ENCODE measurements at regions of chr16 and their contacts with region 1.

Region 1: GRCh38 chr16:52547004-52547833 is at the start of gene TOX3:
- DNase-seq: no peak
- ATAC-seq: peak; percentile 34
- H3K4me3 ChIP-seq: peak within 1 kb of the TSS; percentile 91 to 96 (median 92)
- H3K27ac ChIP-seq: peak within 1 kb of the TSS; percentile 67
- H3K4me1 ChIP-seq: peaks cover 32% of the 10 kb centered on the region
- H3K27me3 ChIP-seq: no peaks in the 10 kb centered on the region; a peak in 1 of 5 replicates
- CTCF ChIP-seq: no peak
- EP300 ChIP-seq: 0 out of 4 replicates have a peak, but pooled peaks of 1 of the 2 experiments have one; percentile 9
- POLR2A ChIP-seq: peak in 1 of 2 experiments; percentile 60; a peak in 1 of 4 replicates
- RAD21 ChIP-seq: no peak
- total RNA-seq, gene TOX3: 12.1 and 14.5 TPM in 2 replicates

Region 2: DNA sequence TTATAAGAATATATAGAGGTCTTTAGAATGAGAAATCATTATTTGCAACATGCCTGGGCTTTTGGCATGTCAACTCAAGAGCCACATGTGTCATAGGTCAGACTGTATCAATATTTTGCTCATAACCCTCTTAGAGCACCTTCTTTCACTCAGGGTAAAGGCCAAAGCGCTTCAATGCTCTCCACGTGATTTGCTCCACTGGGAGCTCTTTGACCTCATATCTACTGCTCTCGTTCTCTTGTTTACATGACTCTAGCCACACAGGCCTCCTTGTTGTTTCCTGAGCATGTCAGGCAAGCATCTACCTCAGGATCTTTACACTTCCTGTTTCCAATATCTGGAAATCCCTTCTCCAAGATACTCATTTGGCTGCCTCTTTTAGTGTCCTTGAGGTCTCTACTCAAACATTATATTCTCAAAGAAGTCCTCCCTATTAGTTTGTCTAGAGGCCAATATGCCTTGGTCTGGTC is 148.7 kb before region 1 on chr16:
- CTCF ChIA-PET with region 1: no interaction called
- POLR2A ChIA-PET with region 1: interaction called, 12 read pairs
- in situ Hi-C with region 1: no loop called
- intact Hi-C with region 1: loop called (anchors 5 kb)
- DNase-seq: peak; percentile 99
- ATAC-seq: peak; percentile 100
- H3K4me3 ChIP-seq: no peak overlapping the region
- H3K27ac ChIP-seq: peak overlapping the region; percentile 66
- H3K4me1 ChIP-seq: peaks cover 28% of the 10 kb centered on the region
- H3K27me3 ChIP-seq: no peaks in the 10 kb centered on the region
- CTCF ChIP-seq: no peak
- EP300 ChIP-seq: peak; percentile 79 to 97; a peak in 3 of 4 replicates
- POLR2A ChIP-seq: no peak
- RAD21 ChIP-seq: no peak

Region 3: GRCh38 chr16:52456368-52456767 is 90.9 kb before region 1 on chr16:
- CTCF ChIA-PET with region 1: interaction called, 3 read pairs
- POLR2A ChIA-PET with region 1: interaction called, 5 read pairs
- in situ Hi-C with region 1: loop called (anchors 5 kb)
- intact Hi-C with region 1: loop called (anchors 5 kb)
- DNase-seq: peak; percentile 95
- ATAC-seq: peak; percentile 92
- H3K4me3 ChIP-seq: no peak overlapping the region; a peak in 1 of 6 replicates
- H3K27ac ChIP-seq: peak overlapping the region; percentile 73
- H3K4me1 ChIP-seq: peaks cover 64% of the 10 kb centered on the region
- H3K27me3 ChIP-seq: no peaks in the 10 kb centered on the region
- CTCF ChIP-seq: no peak
- EP300 ChIP-seq: peak in 1 of 2 experiments; percentile 77; a peak in 1 of 4 replicates
- POLR2A ChIP-seq: no peak
- RAD21 ChIP-seq: no peak

Region 4: DNA sequence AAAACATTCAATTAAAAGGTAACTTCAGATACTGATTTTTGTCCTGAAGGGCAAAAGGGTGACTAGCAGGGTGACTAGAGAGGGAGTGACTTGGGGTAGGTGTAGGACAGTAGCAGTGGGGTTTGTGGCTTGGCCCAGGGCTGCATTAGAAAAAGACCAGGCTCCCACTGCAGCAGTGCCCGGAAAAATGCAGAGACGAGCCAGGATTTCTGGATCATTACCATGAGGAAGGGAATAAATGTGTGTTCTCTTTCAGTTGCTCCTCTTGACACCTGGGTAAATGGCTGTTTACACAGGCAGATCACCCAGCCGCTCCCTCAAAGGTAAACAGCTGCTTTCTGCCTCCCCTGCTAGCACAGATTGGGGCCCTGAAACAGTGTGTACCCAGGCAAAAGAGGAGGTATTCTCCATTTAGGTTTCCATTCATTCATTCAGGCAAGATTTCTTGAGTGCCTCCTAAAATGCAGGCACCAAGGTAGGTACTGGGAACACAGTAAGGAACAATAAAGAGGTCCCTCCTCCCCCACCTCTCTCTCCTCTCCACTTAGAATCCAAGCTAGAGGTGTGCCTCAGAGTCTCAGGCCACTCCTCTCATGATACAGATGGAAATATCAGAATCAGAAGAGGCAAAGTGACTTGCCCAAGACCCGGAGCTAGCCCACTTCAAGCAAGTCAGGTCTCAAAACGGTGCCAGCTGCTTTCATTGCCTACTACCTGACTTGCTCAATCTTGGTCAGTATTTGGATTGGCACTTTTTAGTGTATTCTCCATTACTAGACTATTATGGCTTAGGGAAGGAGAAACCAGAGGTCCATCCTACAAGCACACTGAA is 14.9 kb after region 1 on chr16:
- CTCF ChIA-PET with region 1: no interaction called
- POLR2A ChIA-PET with region 1: interaction called, 35 read pairs
- in situ Hi-C with region 1: no loop called
- intact Hi-C with region 1: loop called (anchors 2 kb)
- DNase-seq: peak; percentile 54
- ATAC-seq: peak; percentile 55
- H3K4me3 ChIP-seq: peak overlapping the region; percentile 27 to 51 (median 40)
- H3K27ac ChIP-seq: peak overlapping the region; percentile 23
- H3K4me1 ChIP-seq: peaks cover 100% of the 10 kb centered on the region
- H3K27me3 ChIP-seq: no peaks in the 10 kb centered on the region
- CTCF ChIP-seq: 0 out of 2 replicates have a peak, but pooled peaks have one; percentile 3
- EP300 ChIP-seq: peak in 1 of 2 experiments; percentile 78; a peak in 2 of 4 replicates
- POLR2A ChIP-seq: no peak
- RAD21 ChIP-seq: no peak

Region 5: DNA sequence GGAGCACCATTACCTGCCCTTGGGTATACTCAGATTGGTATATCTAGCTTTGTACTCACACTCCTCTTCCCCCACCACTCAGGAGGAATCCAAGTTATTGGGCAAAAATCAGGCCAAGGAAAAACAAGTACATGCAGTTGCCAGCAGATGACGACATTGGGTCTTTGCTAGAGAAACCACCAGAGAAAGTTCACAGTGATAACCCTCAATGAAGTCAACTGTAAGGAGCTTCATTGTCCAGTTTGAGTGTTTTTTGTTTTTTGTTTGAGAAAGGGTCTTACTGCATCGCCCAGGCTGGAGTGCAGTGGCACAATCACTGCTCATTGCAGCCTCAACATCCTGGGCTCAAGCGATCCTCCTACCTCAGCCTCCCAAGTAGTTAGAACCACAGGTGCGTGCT is 34.3 kb after region 1 on chr16:
- CTCF ChIA-PET with region 1: no interaction called
- POLR2A ChIA-PET with region 1: interaction called, 57 read pairs
- in situ Hi-C with region 1: no loop called
- intact Hi-C with region 1: no loop called
- DNase-seq: peak; percentile 75
- ATAC-seq: peak; percentile 55
- H3K4me3 ChIP-seq: no peak overlapping the region
- H3K27ac ChIP-seq: no peak overlapping the region
- H3K4me1 ChIP-seq: peaks cover 59% of the 10 kb centered on the region
- H3K27me3 ChIP-seq: no peaks in the 10 kb centered on the region
- CTCF ChIP-seq: peak; percentile 72
- EP300 ChIP-seq: no peak
- POLR2A ChIP-seq: no peak
- RAD21 ChIP-seq: peak; percentile 90

Region 6: GRCh38 chr16:52611817-52612673 is 64.8 kb after region 1 on chr16:
- CTCF ChIA-PET with region 1: no interaction called
- POLR2A ChIA-PET with region 1: interaction called, 35 read pairs
- in situ Hi-C with region 1: no loop called
- intact Hi-C with region 1: loop called (anchors 5 kb)
- DNase-seq: peak; percentile 99
- ATAC-seq: peak; percentile 100
- H3K4me3 ChIP-seq: peak overlapping the region; percentile 57 to 73 (median 67)
- H3K27ac ChIP-seq: peak overlapping the region; percentile 89
- H3K4me1 ChIP-seq: peaks cover 41% of the 10 kb centered on the region
- H3K27me3 ChIP-seq: no peaks in the 10 kb centered on the region
- CTCF ChIP-seq: no peak
- EP300 ChIP-seq: peak; percentile 23 to 97; a peak in 2 of 4 replicates
- POLR2A ChIP-seq: peak; percentile 56 to 67
- RAD21 ChIP-seq: no peak